ENCODE measurements at regions of chr6 and their contacts with region 1.

Region 1: GRCh38 chr6:83067448-83068413 is at the start of gene DOP1A:
- DNase-seq: peak; percentile 92

Region 2: DNA sequence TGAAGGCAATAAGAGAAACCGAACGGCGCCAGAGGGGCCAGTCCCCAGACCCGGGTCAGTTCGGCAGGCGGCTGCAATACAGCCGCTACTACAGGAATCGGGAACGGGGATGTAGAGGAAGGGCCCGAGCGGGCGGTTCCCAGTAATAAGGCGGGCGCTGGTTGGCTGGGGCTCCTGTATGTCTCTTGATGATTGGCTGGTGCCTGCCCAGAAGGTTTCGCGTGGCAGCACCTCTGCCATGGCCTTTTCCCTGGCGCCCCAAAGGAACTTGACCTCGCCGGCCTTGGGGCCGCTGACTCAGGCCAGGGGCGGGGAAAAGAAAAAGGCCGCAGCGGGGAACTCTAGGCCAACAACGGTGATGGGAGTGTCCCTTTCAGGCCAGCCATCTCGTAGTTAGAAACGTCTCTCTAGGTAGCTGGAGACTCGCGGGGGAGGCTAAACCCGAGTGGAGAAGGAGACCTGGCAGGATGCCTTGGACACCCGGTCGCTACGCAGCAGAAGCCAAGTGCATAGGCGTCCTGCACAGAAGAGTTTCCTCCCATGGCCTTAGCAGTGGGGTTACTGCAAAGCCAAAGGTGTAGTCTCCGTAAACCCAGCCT is 820.0 kb before region 1 on chr6 and contains the start of gene IBTK:
- in situ Hi-C with region 1: loop called (anchors 25 kb)
- DNase-seq: peak; percentile 95

Region 3: DNA sequence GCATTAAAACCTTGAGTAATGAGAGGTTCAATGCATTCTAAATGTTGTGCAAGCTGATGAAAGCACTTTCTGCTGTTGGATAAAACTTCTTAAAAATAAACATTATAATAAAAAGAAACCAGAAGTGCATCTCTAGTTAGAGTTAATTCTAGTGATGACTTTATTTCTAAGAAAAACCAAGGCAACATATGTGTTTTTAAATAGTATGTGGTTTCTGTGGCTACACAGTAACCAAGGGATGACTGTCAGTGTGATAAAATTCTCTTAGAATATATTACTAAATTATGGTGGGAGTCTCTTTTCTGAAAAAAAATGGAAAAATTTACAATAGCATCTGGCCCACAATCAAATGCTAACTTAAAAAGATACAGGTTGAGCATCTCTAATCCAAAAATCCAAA is 246.2 kb after region 1 on chr6:
- in situ Hi-C with region 1: no loop called
- DNase-seq: no peak

Measured in ACHN (cell line).